ENCODE measurements at regions of chr11 and their contacts with region 1.

Region 1: GRCh38 chr11:110195845-110196754 is 100.3 kb downstream of the RDX start:
- DNase-seq: peak; percentile 95
- H3K4me3 Mint-ChIP-seq: peak overlapping the region; percentile 47
- H3K27ac Mint-ChIP-seq: peak overlapping the region; percentile 99
- H3K4me1 Mint-ChIP-seq: peaks cover 58% of the 10 kb centered on the region
- H3K27me3 Mint-ChIP-seq: no peaks in the 10 kb centered on the region
- CTCF ChIP-seq: no peak

Region 2: GRCh38 chr11:109853156-109853776 is 342.8 kb before region 1 on chr11:
- CTCF ChIA-PET with region 1: interaction called, 3 read pairs
- POLR2A ChIA-PET with region 1: no interaction called
- intact Hi-C with region 1: loop called (anchors 10 kb)
- DNase-seq: peak; percentile 73
- H3K4me3 Mint-ChIP-seq: no peak overlapping the region
- H3K27ac Mint-ChIP-seq: no peak overlapping the region
- H3K4me1 Mint-ChIP-seq: peaks cover 8% of the 10 kb centered on the region
- H3K27me3 Mint-ChIP-seq: no peaks in the 10 kb centered on the region
- CTCF ChIP-seq: peak; percentile 63

Region 3: DNA sequence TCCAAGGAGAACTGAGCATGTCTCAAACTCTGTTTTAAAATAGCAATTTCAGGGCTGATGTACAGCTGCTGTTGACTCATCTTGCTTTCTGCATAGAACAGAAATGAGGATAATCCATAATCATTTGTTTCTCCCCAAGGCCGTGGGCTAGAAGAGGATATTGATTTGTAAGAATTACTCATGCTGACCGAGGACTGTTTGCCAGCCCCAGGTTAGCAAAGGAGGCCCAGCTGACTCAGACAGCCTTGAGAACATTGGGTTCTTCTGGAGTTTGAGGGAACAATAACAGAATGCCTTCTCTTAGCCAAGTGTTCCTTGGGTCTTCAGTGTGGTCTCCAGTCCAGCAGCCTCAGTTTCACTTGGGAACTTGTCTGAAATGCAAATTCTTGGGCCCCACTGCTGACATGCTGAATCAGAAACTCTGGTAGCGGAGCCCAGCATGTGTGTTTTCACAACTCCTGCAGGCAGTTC is 10.9 kb before region 1 on chr11:
- CTCF ChIA-PET with region 1: interaction called, 8 read pairs
- POLR2A ChIA-PET with region 1: interaction called, 61 read pairs
- intact Hi-C with region 1: no loop called
- DNase-seq: peak; percentile 85
- H3K4me3 Mint-ChIP-seq: peak overlapping the region; percentile 17
- H3K27ac Mint-ChIP-seq: peak overlapping the region; percentile 89
- H3K4me1 Mint-ChIP-seq: peaks cover 41% of the 10 kb centered on the region
- H3K27me3 Mint-ChIP-seq: no peaks in the 10 kb centered on the region
- CTCF ChIP-seq: no peak

Region 4: GRCh38 chr11:110296226-110297075 is 100.4 kb after region 1 on chr11 and contains the start of gene RDX:
- CTCF ChIA-PET with region 1: interaction called, 3 read pairs
- POLR2A ChIA-PET with region 1: interaction called, 12 read pairs
- intact Hi-C with region 1: loop called (anchors 5 kb)
- DNase-seq: peak; percentile 89
- H3K4me3 Mint-ChIP-seq: peak within 1 kb of the TSS; percentile 81
- H3K27ac Mint-ChIP-seq: peak within 1 kb of the TSS; percentile 69
- H3K4me1 Mint-ChIP-seq: peaks cover 18% of the 10 kb centered on the region
- H3K27me3 Mint-ChIP-seq: no peaks in the 10 kb centered on the region
- CTCF ChIP-seq: no peak
- total RNA-seq, gene RDX: 132 and 145 TPM in 2 replicates

Region 5: DNA sequence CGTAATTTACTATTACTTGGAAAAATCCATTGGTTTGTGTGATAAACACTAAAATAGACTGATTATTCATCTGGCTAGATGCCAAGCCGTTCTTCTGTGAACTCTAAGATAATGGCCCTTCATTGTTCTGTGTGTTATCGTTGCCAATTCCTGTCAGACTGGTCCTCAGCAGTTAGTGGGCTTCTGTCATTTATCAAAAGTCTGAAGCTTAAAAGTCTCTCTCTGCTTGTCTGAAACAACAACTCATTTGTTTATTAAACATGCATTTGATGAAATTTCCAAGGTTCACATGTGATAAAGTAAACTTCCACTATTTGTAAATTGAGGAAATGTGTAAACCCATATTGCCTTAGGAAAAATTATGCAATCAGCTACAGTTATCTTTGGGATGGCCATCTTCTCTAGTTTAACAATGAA is 121.4 kb after region 1 on chr11:
- CTCF ChIA-PET with region 1: no interaction called
- POLR2A ChIA-PET with region 1: no interaction called
- intact Hi-C with region 1: no loop called
- DNase-seq: peak; percentile 34
- H3K4me3 Mint-ChIP-seq: no peak overlapping the region
- H3K27ac Mint-ChIP-seq: no peak overlapping the region
- H3K4me1 Mint-ChIP-seq: no peaks in the 10 kb centered on the region
- H3K27me3 Mint-ChIP-seq: no peaks in the 10 kb centered on the region
- CTCF ChIP-seq: no peak

Region 6: GRCh38 chr11:110376711-110377324 is 180.7 kb after region 1 on chr11:
- CTCF ChIA-PET with region 1: interaction called, 35 read pairs
- POLR2A ChIA-PET with region 1: interaction called, 6 read pairs
- intact Hi-C with region 1: loop called (anchors 1 kb)
- DNase-seq: peak; percentile 84
- H3K4me3 Mint-ChIP-seq: no peak overlapping the region
- H3K27ac Mint-ChIP-seq: peak overlapping the region; percentile 61
- H3K4me1 Mint-ChIP-seq: peaks cover 16% of the 10 kb centered on the region
- H3K27me3 Mint-ChIP-seq: no peaks in the 10 kb centered on the region
- CTCF ChIP-seq: peak; percentile 52